ENCODE measurements at regions of chr7 and their contacts with region 1.

Region 1: GRCh38 chr7:73606801-73607691 is 17.3 kb downstream of the MLXIPL start:
- DNase-seq: peak; percentile 80
- ATAC-seq: peak; percentile 83
- H3K4me3 Mint-ChIP-seq: no peak overlapping the region
- H3K27ac Mint-ChIP-seq: no peak overlapping the region
- H3K4me1 Mint-ChIP-seq: no peaks in the 10 kb centered on the region
- H3K27me3 Mint-ChIP-seq: peaks cover 10% of the 10 kb centered on the region

Region 2: DNA sequence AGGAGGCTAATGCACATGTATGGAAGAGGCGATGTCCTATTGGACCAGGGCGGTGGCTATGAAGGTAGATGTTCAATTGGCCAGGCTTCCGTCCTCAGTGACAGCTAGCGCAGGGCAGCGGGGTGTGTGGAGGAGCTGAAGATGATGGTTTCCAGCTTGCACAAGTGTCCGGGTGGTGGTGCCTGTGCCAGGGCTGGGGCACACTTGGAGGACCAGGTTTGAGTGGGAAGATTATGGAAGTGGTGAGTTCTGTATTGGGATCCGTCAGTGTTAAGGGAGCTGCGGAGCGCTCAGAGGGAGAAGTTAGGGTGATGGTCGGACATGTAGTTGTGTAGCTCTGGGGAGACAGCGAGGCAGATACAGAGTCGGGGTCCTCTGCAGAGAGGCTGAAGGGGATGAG is 20.1 kb before region 1 on chr7:
- CTCF ChIA-PET with region 1: interaction called, 11 read pairs
- POLR2A ChIA-PET with region 1: no interaction called
- intact Hi-C with region 1: no loop called
- DNase-seq: no peak
- ATAC-seq: no peak
- H3K4me3 Mint-ChIP-seq: no peak overlapping the region
- H3K27ac Mint-ChIP-seq: no peak overlapping the region
- H3K4me1 Mint-ChIP-seq: peaks cover 7% of the 10 kb centered on the region
- H3K27me3 Mint-ChIP-seq: no peaks in the 10 kb centered on the region

Region 3: DNA sequence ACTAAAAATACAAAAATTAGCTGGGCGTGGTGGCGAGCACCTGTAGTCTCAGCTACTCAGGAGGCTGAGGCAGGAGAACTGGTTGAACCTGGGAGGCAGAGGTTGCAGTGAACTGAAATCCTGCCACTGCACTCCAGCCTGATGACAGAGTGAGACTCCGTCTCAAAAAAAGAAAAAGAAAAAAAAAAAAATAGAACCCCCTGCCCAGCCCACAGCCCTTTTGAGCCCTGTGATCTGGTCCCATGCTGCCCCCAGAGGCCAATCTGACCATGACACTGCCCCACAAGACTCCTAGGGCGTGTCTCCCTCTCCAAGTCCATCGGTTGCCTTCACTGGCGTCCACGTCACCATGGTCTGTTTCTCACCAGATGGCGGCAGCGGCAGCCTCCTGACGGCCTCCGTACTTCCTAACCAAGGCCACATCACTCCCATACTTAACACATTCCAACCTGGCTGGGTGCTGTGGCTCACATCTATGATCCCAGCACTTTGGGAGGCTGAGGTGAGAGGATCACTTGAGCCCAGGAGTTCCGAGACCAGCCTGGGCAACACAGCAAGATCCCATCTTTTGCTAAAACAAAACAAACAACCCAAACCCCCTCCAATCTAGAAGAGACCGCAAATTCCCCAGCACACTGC is 94.4 kb after region 1 on chr7:
- CTCF ChIA-PET with region 1: interaction called, 13 read pairs
- POLR2A ChIA-PET with region 1: no interaction called
- intact Hi-C with region 1: no loop called
- DNase-seq: peak; percentile 59
- ATAC-seq: no peak
- H3K4me3 Mint-ChIP-seq: no peak overlapping the region
- H3K27ac Mint-ChIP-seq: no peak overlapping the region
- H3K4me1 Mint-ChIP-seq: peaks cover 9% of the 10 kb centered on the region
- H3K27me3 Mint-ChIP-seq: no peaks in the 10 kb centered on the region

Region 4: GRCh38 chr7:73726083-73726466 is 119.0 kb after region 1 on chr7:
- CTCF ChIA-PET with region 1: interaction called, 30 read pairs
- POLR2A ChIA-PET with region 1: interaction called, 3 read pairs
- intact Hi-C with region 1: loop called (anchors 1 kb)
- DNase-seq: no peak
- ATAC-seq: peak; percentile 27
- H3K4me3 Mint-ChIP-seq: no peak overlapping the region
- H3K27ac Mint-ChIP-seq: no peak overlapping the region
- H3K4me1 Mint-ChIP-seq: no peaks in the 10 kb centered on the region
- H3K27me3 Mint-ChIP-seq: peaks cover 7% of the 10 kb centered on the region

Region 5: GRCh38 chr7:73851410-73852234 is 244.6 kb after region 1 on chr7:
- CTCF ChIA-PET with region 1: interaction called, 3 read pairs
- POLR2A ChIA-PET with region 1: no interaction called
- intact Hi-C with region 1: loop called (anchors 2 to 10 kb)
- DNase-seq: peak; percentile 60
- ATAC-seq: peak; percentile 96
- H3K4me3 Mint-ChIP-seq: no peak overlapping the region
- H3K27ac Mint-ChIP-seq: peak overlapping the region; percentile 65
- H3K4me1 Mint-ChIP-seq: peaks cover 33% of the 10 kb centered on the region
- H3K27me3 Mint-ChIP-seq: peaks cover 12% of the 10 kb centered on the region

Measured in activated CD4-positive, alpha-beta T cell treated with anti-CD3 and anti-CD28 coated beads for 36 hours (primary cell).